ENCODE measurements at regions of chr9 and their contacts with region 1.

Region 1: GRCh38 chr9:126532019-126532462 is 81.7 kb upstream of the LMX1B start:
- DNase-seq: peak; percentile 79
- H3K4me3 ChIP-seq: no peak overlapping the region
- H3K27ac ChIP-seq: peak overlapping the region in 1 of 2 experiments; percentile 96; a peak in 2 of 4 replicates
- H3K4me1 ChIP-seq: peaks cover 0 to 77% of the 10 kb centered on the region in 2 experiments; a peak in 2 of 4 replicates
- H3K27me3 ChIP-seq: peaks cover 25% of the 10 kb centered on the region; the same call in 1 of the 2 replicates
- CTCF ChIP-seq: no peak
- EP300 ChIP-seq: peak in 1 of 2 experiments; percentile 69; a peak in 1 of 4 replicates
- RAD21 ChIP-seq: no peak

Region 2: GRCh38 chr9:125785248-125785751 is 746.7 kb before region 1 on chr9:
- CTCF ChIA-PET with region 1: no interaction called
- POLR2A ChIA-PET with region 1: no interaction called
- DNase-seq: no peak
- H3K4me3 ChIP-seq: no peak overlapping the region
- H3K27ac ChIP-seq: no peak overlapping the region
- H3K4me1 ChIP-seq: no peaks in the 10 kb centered on the region; a peak in 1 of 4 replicates
- H3K27me3 ChIP-seq: no peaks in the 10 kb centered on the region
- CTCF ChIP-seq: no peak
- EP300 ChIP-seq: no peak
- RAD21 ChIP-seq: no peak

Region 3: GRCh38 chr9:126151031-126151685 is 380.9 kb before region 1 on chr9:
- CTCF ChIA-PET with region 1: no interaction called
- POLR2A ChIA-PET with region 1: no interaction called
- DNase-seq: peak; percentile 45
- H3K4me3 ChIP-seq: no peak overlapping the region
- H3K27ac ChIP-seq: peak overlapping the region in 1 of 2 experiments; percentile 60; a peak in 2 of 4 replicates
- H3K4me1 ChIP-seq: peaks cover 0 to 23% of the 10 kb centered on the region in 2 experiments; a peak in 1 of 4 replicates
- H3K27me3 ChIP-seq: no peaks in the 10 kb centered on the region
- CTCF ChIP-seq: no peak
- EP300 ChIP-seq: no peak
- RAD21 ChIP-seq: no peak

Region 4: DNA sequence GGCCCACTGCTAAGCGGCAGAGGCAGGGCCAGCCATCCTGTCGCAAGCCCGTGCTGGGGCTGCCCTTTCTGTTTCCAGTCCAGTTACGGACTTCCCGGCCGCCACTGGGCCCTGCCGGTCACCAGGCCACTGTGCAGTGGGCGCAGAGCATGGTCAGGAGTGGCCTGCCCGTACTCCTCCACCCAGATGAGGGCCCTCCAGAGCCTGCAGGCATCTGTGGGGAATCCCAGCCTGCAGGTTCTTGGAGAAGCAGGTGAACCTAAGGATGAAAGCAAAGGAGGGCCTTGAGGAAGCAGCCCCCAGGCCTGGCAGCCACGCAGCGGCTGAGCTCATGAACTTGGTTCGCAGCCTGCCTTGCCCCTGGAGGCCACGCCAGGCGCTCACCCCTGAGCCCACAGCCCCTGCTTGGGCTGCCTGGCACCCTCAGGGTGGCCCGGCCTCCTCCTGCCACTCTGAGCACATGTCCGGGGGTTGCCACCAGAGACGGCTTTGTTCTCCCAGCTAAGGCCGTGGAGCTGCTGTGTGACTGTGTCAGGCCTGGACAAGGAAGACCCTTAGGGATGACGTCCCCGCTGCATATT is 25.6 kb before region 1 on chr9:
- CTCF ChIA-PET with region 1: interaction called, 42 read pairs
- POLR2A ChIA-PET with region 1: interaction called, 8 read pairs
- DNase-seq: no peak
- H3K4me3 ChIP-seq: no peak overlapping the region
- H3K27ac ChIP-seq: peak overlapping the region in 1 of 2 experiments; percentile 28; a peak in 1 of 4 replicates
- H3K4me1 ChIP-seq: peaks cover 0 to 45% of the 10 kb centered on the region in 2 experiments; a peak in 1 of 4 replicates
- H3K27me3 ChIP-seq: no peaks in the 10 kb centered on the region
- CTCF ChIP-seq: no peak
- EP300 ChIP-seq: no peak
- RAD21 ChIP-seq: no peak

Region 5: GRCh38 chr9:126514047-126514821 is 17.8 kb before region 1 on chr9:
- CTCF ChIA-PET with region 1: interaction called, 40 read pairs
- POLR2A ChIA-PET with region 1: interaction called, 8 read pairs
- DNase-seq: peak; percentile 92
- H3K4me3 ChIP-seq: no peak overlapping the region
- H3K27ac ChIP-seq: peak overlapping the region in 1 of 2 experiments; percentile 54; a peak in 1 of 4 replicates
- H3K4me1 ChIP-seq: peaks cover 0 to 54% of the 10 kb centered on the region in 2 experiments; a peak in 2 of 4 replicates
- H3K27me3 ChIP-seq: no peaks in the 10 kb centered on the region
- CTCF ChIP-seq: peak; percentile 40
- EP300 ChIP-seq: no peak
- RAD21 ChIP-seq: peak; percentile 46

Region 6: GRCh38 chr9:126550891-126551351 is 18.9 kb after region 1 on chr9:
- CTCF ChIA-PET with region 1: interaction called, 473 read pairs
- POLR2A ChIA-PET with region 1: interaction called, 44 read pairs
- DNase-seq: peak; percentile 70
- H3K4me3 ChIP-seq: no peak overlapping the region
- H3K27ac ChIP-seq: peak overlapping the region in 1 of 2 experiments; percentile 97; a peak in 2 of 4 replicates
- H3K4me1 ChIP-seq: peaks cover 0 to 51% of the 10 kb centered on the region in 2 experiments; a peak in 2 of 4 replicates
- H3K27me3 ChIP-seq: no peaks in the 10 kb centered on the region; the same call in 1 of the 2 replicates
- CTCF ChIP-seq: no peak
- EP300 ChIP-seq: peak in 1 of 2 experiments; percentile 78; a peak in 2 of 4 replicates
- RAD21 ChIP-seq: no peak

Region 7: GRCh38 chr9:126558051-126558665 is 26.1 kb after region 1 on chr9:
- CTCF ChIA-PET with region 1: interaction called, 473 read pairs
- POLR2A ChIA-PET with region 1: interaction called, 3 read pairs
- DNase-seq: peak; percentile 83
- H3K4me3 ChIP-seq: no peak overlapping the region; a peak in 1 of 4 replicates
- H3K27ac ChIP-seq: no peak overlapping the region
- H3K4me1 ChIP-seq: peaks cover 0 to 10% of the 10 kb centered on the region in 2 experiments; a peak in 1 of 4 replicates
- H3K27me3 ChIP-seq: peaks cover 27% of the 10 kb centered on the region
- CTCF ChIP-seq: peak; percentile 87
- EP300 ChIP-seq: no peak
- RAD21 ChIP-seq: peak; percentile 94